ENCODE measurements at regions of chr11 and their contacts with region 1.

Region 1: GRCh38 chr11:82698576-82699352 is 34.9 kb downstream of the FAM181B start:
- H3K4me3 Mint-ChIP-seq: no peak overlapping the region
- H3K27ac Mint-ChIP-seq: no peak overlapping the region
- H3K4me1 Mint-ChIP-seq: no peaks in the 10 kb centered on the region
- H3K27me3 Mint-ChIP-seq: peaks cover 4% of the 10 kb centered on the region

Region 2: GRCh38 chr11:81644239-81644840 is 1054.4 kb before region 1 on chr11:
- intact Hi-C with region 1: loop called (anchors 1 kb)
- H3K4me3 Mint-ChIP-seq: no peak overlapping the region
- H3K27ac Mint-ChIP-seq: no peak overlapping the region
- H3K4me1 Mint-ChIP-seq: no peaks in the 10 kb centered on the region
- H3K27me3 Mint-ChIP-seq: peaks cover 7% of the 10 kb centered on the region

Region 3: DNA sequence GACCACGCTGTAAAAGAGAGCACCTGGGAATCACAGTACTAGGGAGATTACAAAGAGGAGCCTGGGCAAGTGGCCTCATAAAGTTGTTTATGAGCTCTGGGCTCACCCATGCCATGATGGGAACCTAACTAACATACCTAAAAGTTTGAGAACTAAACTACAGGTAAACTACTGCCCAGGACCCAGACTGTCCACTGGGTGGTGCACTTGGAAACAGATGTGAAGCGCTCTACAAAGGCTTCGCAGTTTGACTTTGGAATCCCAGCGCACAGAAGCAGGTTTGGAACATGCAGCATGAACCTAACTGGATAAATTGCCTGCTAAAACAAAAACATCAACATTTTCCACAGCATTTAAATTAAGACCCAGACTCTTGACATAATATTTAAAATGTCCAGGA is 383.7 kb before region 1 on chr11:
- intact Hi-C with region 1: loop called (anchors 10 kb)
- H3K4me3 Mint-ChIP-seq: no peak overlapping the region
- H3K27ac Mint-ChIP-seq: no peak overlapping the region
- H3K4me1 Mint-ChIP-seq: no peaks in the 10 kb centered on the region
- H3K27me3 Mint-ChIP-seq: no peaks in the 10 kb centered on the region